GM12878 (cell line): ENCODE measurements at regions of chr4 and their contacts with region 1.

Region 1: GRCh38 chr4:140884431-140885058 is 128.4 kb upstream of the TBC1D9 start:
- DNase-seq: peak; percentile 9
- ATAC-seq: peak; percentile 98
- H3K4me3 ChIP-seq: no peak overlapping the region
- H3K27ac ChIP-seq: no peak overlapping the region
- H3K4me1 ChIP-seq: no peaks in the 10 kb centered on the region
- H3K27me3 ChIP-seq: no peaks in the 10 kb centered on the region
- CTCF ChIP-seq: peak; percentile 77 to 82 (median 80)
- EP300 ChIP-seq: no peak
- POLR2A ChIP-seq: no peak
- RAD21 ChIP-seq: peak; percentile 93

Region 2: DNA sequence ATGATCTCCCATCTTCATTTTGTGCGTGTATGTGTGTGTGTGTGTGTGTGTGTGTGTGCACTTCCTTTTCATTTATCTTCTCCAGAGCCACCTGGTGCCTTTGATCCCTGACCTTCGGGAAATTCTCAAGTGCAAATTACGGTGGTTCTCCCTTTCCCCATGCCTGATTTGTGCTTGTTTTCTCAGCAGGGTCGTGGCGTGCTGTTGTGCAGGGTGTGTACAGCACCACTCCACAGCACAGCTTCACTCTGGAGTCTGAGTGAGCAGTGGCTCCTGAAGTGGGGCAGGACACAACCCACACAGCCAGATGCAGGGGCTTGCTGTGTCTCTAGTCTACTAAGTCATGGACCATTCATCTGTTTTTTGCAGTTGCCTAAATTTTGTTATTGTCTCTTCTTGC is 14.1 kb before region 1 on chr4:
- CTCF ChIA-PET with region 1: interaction called, 19 read pairs
- POLR2A ChIA-PET with region 1: no interaction called
- RAD21 ChIA-PET with region 1: interaction called, 5 read pairs
- SMC1A ChIA-PET with region 1: interaction called, 9 read pairs
- in situ Hi-C with region 1: no loop called
- intact Hi-C with region 1: no loop called
- DNase-seq: no peak
- ATAC-seq: no peak
- H3K4me3 ChIP-seq: no peak overlapping the region
- H3K27ac ChIP-seq: no peak overlapping the region
- H3K4me1 ChIP-seq: no peaks in the 10 kb centered on the region
- H3K27me3 ChIP-seq: peaks cover 2 to 3% of the 10 kb centered on the region in 2 experiments; a peak in 2 of 4 replicates
- CTCF ChIP-seq: no peak
- EP300 ChIP-seq: no peak
- POLR2A ChIP-seq: no peak
- RAD21 ChIP-seq: no peak

Region 3: DNA sequence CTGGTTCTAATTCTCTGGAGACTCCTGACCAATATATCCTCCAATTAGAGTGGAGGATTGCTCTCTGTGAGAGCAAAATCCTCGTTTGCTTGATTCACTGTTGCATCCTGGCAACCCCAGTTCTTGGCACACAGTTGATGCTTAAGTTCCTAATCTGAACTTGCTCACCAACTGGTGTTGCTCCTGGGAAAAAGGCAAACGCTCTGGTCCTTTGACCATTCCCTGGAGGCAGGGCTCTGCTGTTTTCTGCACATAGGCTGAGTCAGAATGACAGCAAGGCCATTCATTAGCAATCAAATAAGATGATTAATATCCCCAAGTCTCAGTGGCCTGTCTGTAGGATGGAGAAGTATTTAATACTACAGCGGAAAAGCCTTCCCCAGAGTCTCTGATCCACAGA is 44.3 kb after region 1 on chr4:
- CTCF ChIA-PET with region 1: no interaction called
- POLR2A ChIA-PET with region 1: no interaction called
- RAD21 ChIA-PET with region 1: no interaction called
- SMC1A ChIA-PET with region 1: no interaction called
- in situ Hi-C with region 1: no loop called
- intact Hi-C with region 1: no loop called
- DNase-seq: no peak
- ATAC-seq: no peak
- H3K4me3 ChIP-seq: no peak overlapping the region
- H3K27ac ChIP-seq: no peak overlapping the region
- H3K4me1 ChIP-seq: no peaks in the 10 kb centered on the region
- H3K27me3 ChIP-seq: no peaks in the 10 kb centered on the region; a peak in 1 of 4 replicates
- CTCF ChIP-seq: no peak
- EP300 ChIP-seq: no peak
- POLR2A ChIP-seq: no peak
- RAD21 ChIP-seq: no peak